ENCODE measurements at regions of chr7 and their contacts with region 1.

Region 1: DNA sequence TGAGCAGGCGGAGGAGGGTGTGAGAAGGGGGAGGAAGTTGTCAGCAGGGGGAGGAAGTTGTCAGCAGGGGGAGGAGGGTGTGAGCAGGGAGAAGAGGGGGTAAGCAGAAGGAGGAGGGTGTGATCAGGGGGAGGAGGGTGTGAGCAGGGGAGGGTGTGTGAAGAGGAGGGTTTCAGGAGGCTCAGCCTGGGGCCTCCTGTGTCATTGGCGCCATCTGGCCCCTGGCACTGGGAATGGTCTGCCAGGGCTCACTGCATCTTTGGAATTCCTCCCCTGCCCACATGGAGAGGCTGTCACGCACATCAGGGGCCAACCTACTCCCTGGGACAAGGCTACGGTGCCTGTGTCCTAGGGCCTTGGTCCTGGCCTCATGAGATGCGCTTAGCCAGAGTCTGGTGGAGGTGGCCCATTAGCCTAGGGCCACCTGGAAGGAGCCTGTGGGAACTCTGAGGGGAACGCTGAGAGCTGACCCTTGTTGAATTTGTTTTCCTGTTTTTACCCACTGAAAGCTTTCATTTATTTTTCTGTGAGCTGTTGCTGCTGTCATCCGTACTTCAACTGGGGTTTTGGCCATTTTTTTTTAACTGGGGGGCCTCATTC is 18.0 kb downstream of the CAMK2B start:
- DNase-seq: no peak
- ATAC-seq: peak; percentile 59 to 85 (median 72)
- H3K4me3 ChIP-seq: no peak overlapping the region
- H3K27ac ChIP-seq: peak overlapping the region in 5 of 10 donors; percentile 32 to 89 (median 84)
- H3K4me1 ChIP-seq: peaks cover 0 to 51% (median 20%) of the 10 kb centered on the region in 9 donors
- H3K27me3 ChIP-seq: peaks cover 0 to 30% (median 5%) of the 10 kb centered on the region in 7 donors
- CTCF ChIP-seq: peak in 5 of 9 donors; percentile 27 to 58 (median 49)

Region 2: DNA sequence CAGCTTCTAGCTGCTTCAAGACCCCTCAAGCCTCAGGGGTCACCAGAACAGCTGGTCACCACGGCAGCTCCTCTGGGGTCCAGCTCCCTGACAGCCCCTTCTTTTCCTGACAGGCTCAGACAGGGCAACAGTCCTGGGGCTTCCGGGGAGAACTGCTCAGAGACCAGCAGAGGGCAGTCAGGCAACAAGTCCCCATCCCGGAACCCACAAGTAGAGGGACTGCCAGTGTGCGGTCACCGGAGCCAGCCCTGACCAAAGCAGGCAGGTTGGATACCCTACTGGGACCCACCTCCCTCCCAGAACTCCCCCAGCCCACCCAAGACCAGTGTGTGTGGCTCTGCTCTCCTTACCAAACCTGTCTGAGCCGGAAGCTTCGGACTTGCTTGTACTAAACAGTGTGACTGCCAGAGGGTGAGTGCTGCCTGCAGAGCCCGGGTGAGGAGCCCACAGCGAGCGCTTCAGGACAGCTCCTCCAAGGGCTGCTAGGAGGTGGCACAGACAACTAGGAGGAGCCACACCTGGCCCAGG is 66.4 kb before region 1 on chr7:
- intact Hi-C with region 1: loop called in 6 of 10 experiments (anchors 5 to 10 kb)
- DNase-seq: peak; percentile 65 to 70
- ATAC-seq: peak; percentile 72 to 88 (median 83)
- H3K4me3 ChIP-seq: no peak overlapping the region
- H3K27ac ChIP-seq: no peak overlapping the region
- H3K4me1 ChIP-seq: peaks cover 0 to 16% (median 5%) of the 10 kb centered on the region in 9 donors
- H3K27me3 ChIP-seq: no peaks in the 10 kb centered on the region
- CTCF ChIP-seq: peak; percentile 49 to 79 (median 72)

Region 3: DNA sequence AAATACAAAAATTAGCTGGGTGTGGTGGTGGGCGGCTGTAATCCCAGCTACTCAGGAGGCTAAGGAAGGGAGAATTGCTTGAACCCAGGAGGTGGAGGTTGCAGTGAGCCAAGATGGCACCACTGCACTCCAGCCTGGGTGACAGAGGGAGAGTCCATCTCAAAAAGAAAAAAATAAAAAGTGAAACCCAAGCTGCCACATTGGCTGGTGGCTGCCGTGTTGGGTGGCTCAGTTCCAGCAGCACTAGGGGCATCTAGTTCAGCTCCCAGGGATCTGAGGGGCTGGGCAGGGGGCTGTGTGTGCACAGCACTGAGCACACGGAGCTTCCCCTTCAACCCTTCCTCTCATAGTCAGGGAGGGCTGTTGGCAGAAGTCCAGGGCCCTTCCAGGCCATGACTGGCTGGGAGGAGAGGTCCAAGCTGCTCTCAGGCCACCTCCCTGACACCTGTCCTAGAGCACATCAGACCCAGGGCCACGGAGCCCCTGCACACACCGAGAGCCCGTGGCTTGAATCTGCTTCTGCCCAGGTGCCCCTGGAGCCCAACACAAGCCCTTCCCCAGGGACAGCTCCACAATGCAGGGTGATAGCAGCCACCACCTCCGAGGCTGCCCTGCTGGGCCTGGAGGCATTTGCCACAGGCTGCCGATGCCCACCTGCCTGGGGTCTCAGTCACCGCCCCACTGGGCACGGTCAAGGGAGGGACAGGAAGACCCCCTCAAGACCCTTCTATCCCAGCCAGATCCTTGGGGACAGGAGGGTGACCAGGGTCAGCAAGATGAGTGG is 59.3 kb before region 1 on chr7:
- intact Hi-C with region 1: loop called in 6 of 10 experiments (anchors 5 to 10 kb)
- DNase-seq: no peak
- ATAC-seq: no peak
- H3K4me3 ChIP-seq: no peak overlapping the region
- H3K27ac ChIP-seq: no peak overlapping the region
- H3K4me1 ChIP-seq: peaks cover 0 to 9% (median 0%) of the 10 kb centered on the region in 9 donors
- H3K27me3 ChIP-seq: no peaks in the 10 kb centered on the region
- CTCF ChIP-seq: no peak

Region 4: GRCh38 chr7:44348300-44348699 is 40.9 kb after region 1 on chr7:
- intact Hi-C with region 1: no loop called
- DNase-seq: no peak
- ATAC-seq: peak in 6 of 8 donors; percentile 13 to 47 (median 30)
- H3K4me3 ChIP-seq: no peak overlapping the region
- H3K27ac ChIP-seq: peak overlapping the region in 1 of 10 donors; percentile 51
- H3K4me1 ChIP-seq: peaks cover 0 to 20% (median 0%) of the 10 kb centered on the region in 9 donors
- H3K27me3 ChIP-seq: peaks cover 0 to 4% (median 0%) of the 10 kb centered on the region in 7 donors
- CTCF ChIP-seq: peak in 4 of 9 donors; percentile 8 to 26 (median 16)

Measured in heart right ventricle (tissue), 16 donors.